Esophagus muscularis mucosa (tissue), 4 donors: ENCODE measurements at regions of chr7 and their contacts with region 1.

Region 1: GRCh38 chr7:78510580-78511188 is 712.1 kb downstream of the PHTF2 start:
- DNase-seq: no peak
- H3K4me3 ChIP-seq: no peak overlapping the region
- H3K27ac ChIP-seq: no peak overlapping the region
- H3K4me1 ChIP-seq: no peaks in the 10 kb centered on the region
- H3K27me3 ChIP-seq: no peaks in the 10 kb centered on the region
- CTCF ChIP-seq: peak; percentile 43 to 58 (median 48)
- EP300 ChIP-seq: no peak
- POLR2A ChIP-seq: no peak

Region 2: GRCh38 chr7:78463039-78463438 is 47.6 kb before region 1 on chr7:
- intact Hi-C with region 1: no loop called
- DNase-seq: no peak
- H3K4me3 ChIP-seq: no peak overlapping the region
- H3K27ac ChIP-seq: no peak overlapping the region
- H3K4me1 ChIP-seq: no peaks in the 10 kb centered on the region
- H3K27me3 ChIP-seq: no peaks in the 10 kb centered on the region
- CTCF ChIP-seq: no peak
- EP300 ChIP-seq: no peak
- POLR2A ChIP-seq: no peak

Region 3: GRCh38 chr7:78702770-78703169 is 192.1 kb after region 1 on chr7:
- intact Hi-C with region 1: no loop called
- DNase-seq: no peak
- H3K4me3 ChIP-seq: no peak overlapping the region
- H3K27ac ChIP-seq: no peak overlapping the region
- H3K4me1 ChIP-seq: peaks cover 0 to 16% (median 6%) of the 10 kb centered on the region in 4 donors
- H3K27me3 ChIP-seq: no peaks in the 10 kb centered on the region
- CTCF ChIP-seq: no peak
- EP300 ChIP-seq: no peak
- POLR2A ChIP-seq: no peak

Region 4: GRCh38 chr7:79176859-79177477 is 666.3 kb after region 1 on chr7:
- intact Hi-C with region 1: loop called (anchors 10 kb)
- DNase-seq: no peak
- H3K4me3 ChIP-seq: no peak overlapping the region
- H3K27ac ChIP-seq: no peak overlapping the region
- H3K4me1 ChIP-seq: peaks cover 0 to 4% (median 0%) of the 10 kb centered on the region in 4 donors
- H3K27me3 ChIP-seq: no peaks in the 10 kb centered on the region
- CTCF ChIP-seq: peak; percentile 35 to 56 (median 55)
- EP300 ChIP-seq: no peak
- POLR2A ChIP-seq: no peak